HEK293 (cell line): ENCODE measurements at regions of chr9 and their contacts with region 1.

Region 1: DNA sequence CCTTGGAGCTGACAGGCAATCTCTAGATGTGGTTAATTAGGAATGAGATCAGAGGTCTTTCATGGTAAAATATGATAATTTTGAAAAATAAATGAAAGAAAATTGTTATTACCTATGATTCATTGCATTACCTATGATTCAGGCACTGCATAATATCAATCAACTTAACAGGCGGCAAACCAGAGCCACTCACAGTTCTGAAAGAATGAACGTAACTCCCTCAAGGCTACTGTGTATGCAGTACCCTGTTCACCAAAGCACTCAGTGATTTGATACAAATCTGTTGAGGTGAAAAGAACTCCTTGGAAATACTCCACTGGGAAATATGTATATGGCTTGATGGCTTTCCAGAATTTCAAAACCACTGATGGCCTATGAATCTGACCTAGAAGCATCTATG is 398.9 kb downstream of the ACTL7B start:
- H3K4me3 ChIP-seq: no peak overlapping the region
- H3K27ac ChIP-seq: no peak overlapping the region
- H3K4me1 ChIP-seq: no peaks in the 10 kb centered on the region
- CTCF ChIP-seq: no peak

Region 2: GRCh38 chr9:108416321-108416720 is 40.6 kb before region 1 on chr9:
- CTCF ChIA-PET with region 1: no interaction called
- POLR2A ChIA-PET with region 1: no interaction called
- H3K4me3 ChIP-seq: no peak overlapping the region
- H3K27ac ChIP-seq: no peak overlapping the region
- H3K4me1 ChIP-seq: no peaks in the 10 kb centered on the region
- CTCF ChIP-seq: no peak

Region 3: GRCh38 chr9:108468402-108468801 is 11.5 kb after region 1 on chr9:
- CTCF ChIA-PET with region 1: interaction called, 31 read pairs
- POLR2A ChIA-PET with region 1: no interaction called
- H3K4me3 ChIP-seq: no peak overlapping the region
- H3K27ac ChIP-seq: no peak overlapping the region
- H3K4me1 ChIP-seq: no peaks in the 10 kb centered on the region
- CTCF ChIP-seq: no peak